Activated T-helper 2 cell treated with anti-CD3 and anti-CD28 coated beads, Interferon-gamma antibody, Interleukin-2, Interleukin-4, amounts not matched to agents 10 μg/mL and 5 μg/mL and 100 μg/mL, durations not matched to agents 14 hours and 24 hours and 36 hours (primary cell): ENCODE measurements at regions of chr7 and their contacts with region 1.

Region 1: GRCh38 chr7:131107337-131108211 is 220.1 kb upstream of the MKLN1 start:
- DNase-seq: peak; percentile 75
- H3K4me3 Mint-ChIP-seq: peak overlapping the region; percentile 98
- H3K27ac Mint-ChIP-seq: peak overlapping the region; percentile 97
- H3K4me1 Mint-ChIP-seq: peaks cover 54% of the 10 kb centered on the region
- H3K27me3 Mint-ChIP-seq: no peaks in the 10 kb centered on the region

Region 2: GRCh38 chr7:130961128-130961601 is 146.4 kb before region 1 on chr7:
- intact Hi-C with region 1: loop called (anchors 2 kb)
- DNase-seq: peak; percentile 85
- H3K4me3 Mint-ChIP-seq: peak overlapping the region; percentile 95
- H3K27ac Mint-ChIP-seq: peak overlapping the region; percentile 98
- H3K4me1 Mint-ChIP-seq: peaks cover 34% of the 10 kb centered on the region
- H3K27me3 Mint-ChIP-seq: no peaks in the 10 kb centered on the region

Region 3: GRCh38 chr7:131071786-131072504 is 35.6 kb before region 1 on chr7:
- intact Hi-C with region 1: loop called (anchors 2 kb)
- DNase-seq: no peak
- H3K4me3 Mint-ChIP-seq: no peak overlapping the region
- H3K27ac Mint-ChIP-seq: peak overlapping the region; percentile 36
- H3K4me1 Mint-ChIP-seq: peaks cover 32% of the 10 kb centered on the region
- H3K27me3 Mint-ChIP-seq: no peaks in the 10 kb centered on the region

Region 4: DNA sequence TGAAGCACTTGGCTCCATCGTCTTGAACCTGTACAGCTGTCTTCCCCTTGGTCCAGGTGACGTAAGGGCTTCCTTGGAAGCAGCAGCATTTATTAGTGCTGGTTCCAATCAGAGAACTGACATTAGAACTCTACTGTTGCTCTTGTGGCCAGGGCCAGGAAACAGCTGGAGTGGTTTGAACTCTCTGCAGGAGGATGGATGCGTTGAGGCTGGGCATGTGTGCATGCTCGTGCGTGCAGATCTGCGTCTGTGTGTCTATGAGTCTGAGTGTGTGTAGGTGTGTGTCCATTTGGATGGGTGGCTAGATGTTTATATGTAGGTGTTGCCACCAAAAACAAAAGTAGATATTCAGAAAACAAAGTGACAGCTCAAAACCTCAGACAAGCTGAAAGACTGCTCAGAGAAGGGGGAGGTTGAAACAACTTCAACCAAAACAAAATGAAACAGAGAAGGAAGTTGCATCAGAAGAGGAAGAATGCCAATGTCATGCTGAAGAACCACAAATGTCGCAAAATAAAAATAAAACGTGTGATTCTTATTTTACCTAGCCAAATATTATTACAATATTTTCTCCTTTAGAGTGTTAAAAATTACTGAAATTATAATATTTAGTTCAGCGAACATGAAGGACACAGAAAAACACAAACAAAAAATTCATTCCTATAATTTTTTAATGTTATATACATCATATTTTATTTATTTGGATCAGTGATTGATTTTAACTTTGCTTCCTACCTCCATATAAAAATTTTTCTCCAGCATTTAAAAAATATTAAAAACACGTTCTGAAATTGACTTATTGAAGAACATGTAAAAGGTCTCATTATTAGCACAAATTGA is 124.0 kb after region 1 on chr7:
- intact Hi-C with region 1: loop called (anchors 1 kb)
- DNase-seq: peak; percentile 63
- H3K4me3 Mint-ChIP-seq: peak overlapping the region; percentile 59
- H3K27ac Mint-ChIP-seq: peak overlapping the region; percentile 83
- H3K4me1 Mint-ChIP-seq: peaks cover 58% of the 10 kb centered on the region
- H3K27me3 Mint-ChIP-seq: no peaks in the 10 kb centered on the region

Region 5: DNA sequence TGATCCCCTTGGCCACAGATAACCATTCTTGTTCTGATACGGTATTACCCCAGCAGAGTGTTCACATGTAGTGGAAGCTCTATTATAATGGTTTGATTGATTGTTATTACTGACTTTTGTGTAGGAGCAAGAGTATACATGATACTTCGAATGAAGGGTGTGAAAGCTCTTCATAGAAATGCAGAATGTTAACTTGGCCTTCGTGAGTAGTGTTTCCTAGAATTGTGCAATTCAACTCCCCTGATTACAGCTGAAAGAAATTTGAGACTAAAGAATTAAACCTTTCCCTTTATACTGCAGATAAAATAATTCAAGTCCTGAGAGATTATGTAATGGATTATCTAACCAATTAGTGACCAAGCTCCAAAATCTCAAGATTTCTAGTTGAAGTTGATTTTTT is 258.3 kb after region 1 on chr7:
- intact Hi-C with region 1: loop called (anchors 5 kb)
- DNase-seq: no peak
- H3K4me3 Mint-ChIP-seq: no peak overlapping the region
- H3K27ac Mint-ChIP-seq: no peak overlapping the region
- H3K4me1 Mint-ChIP-seq: peaks cover 69% of the 10 kb centered on the region
- H3K27me3 Mint-ChIP-seq: no peaks in the 10 kb centered on the region

Region 6: GRCh38 chr7:131501422-131501821 is 393.8 kb after region 1 on chr7:
- intact Hi-C with region 1: loop called (anchors 2 kb)
- DNase-seq: peak; percentile 52
- H3K4me3 Mint-ChIP-seq: no peak overlapping the region
- H3K27ac Mint-ChIP-seq: peak overlapping the region; percentile 43
- H3K4me1 Mint-ChIP-seq: peaks cover 29% of the 10 kb centered on the region
- H3K27me3 Mint-ChIP-seq: no peaks in the 10 kb centered on the region